Naive thymus-derived CD4-positive, alpha-beta T cell (primary cell): ENCODE measurements at regions of chr16 and their contacts with region 1.

Region 1: DNA sequence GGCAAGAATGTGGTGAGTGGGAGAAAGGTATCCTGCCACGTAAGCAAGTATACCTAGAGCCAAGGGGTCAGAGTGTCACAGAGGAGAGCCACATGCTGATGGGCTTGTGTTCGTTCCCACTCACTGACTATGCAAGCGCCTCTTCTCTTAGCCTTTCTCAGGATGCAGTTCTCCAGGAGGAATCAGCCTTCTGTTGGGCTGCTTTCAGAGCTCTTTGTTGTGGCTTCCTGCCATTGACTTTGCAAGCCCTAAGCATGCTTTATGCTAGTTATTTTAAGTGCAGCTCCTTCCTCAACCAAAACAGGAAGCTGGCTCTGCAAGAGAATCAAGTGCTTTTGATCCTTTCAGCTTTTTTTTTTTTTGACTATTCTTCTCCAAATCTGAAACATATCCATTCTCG is 66.6 kb downstream of the SIAH1 start:
- DNase-seq: peak in 8 of 9 donors; percentile 25 to 83 (median 76)
- ATAC-seq: peak; percentile 92
- H3K4me3 ChIP-seq: peak overlapping the region; percentile 25
- H3K4me3 Mint-ChIP-seq: peak overlapping the region; percentile 62 to 88 (median 80)
- H3K27ac ChIP-seq: peak overlapping the region; percentile 9
- H3K27ac Mint-ChIP-seq: peak overlapping the region; percentile 58 to 88 (median 82)
- H3K4me1 ChIP-seq: peaks cover 20 to 35% of the 10 kb centered on the region in 2 donors
- H3K4me1 Mint-ChIP-seq: peaks cover 17 to 77% (median 62%) of the 10 kb centered on the region in 7 donors
- H3K27me3 ChIP-seq: no peaks in the 10 kb centered on the region
- H3K27me3 Mint-ChIP-seq: no peaks in the 10 kb centered on the region

Region 2: GRCh38 chr16:48244080-48244862 is 74.4 kb before region 1 on chr16 and contains the start of gene LONP2:
- CTCF ChIA-PET with region 1: no interaction called
- POLR2A ChIA-PET with region 1: no interaction called
- intact Hi-C with region 1: loop called (anchors 1 kb)
- DNase-seq: peak; percentile 79 to 97 (median 93)
- ATAC-seq: peak; percentile 99
- H3K4me3 ChIP-seq: peak within 1 kb of the TSS; percentile 78
- H3K4me3 Mint-ChIP-seq: peak within 1 kb of the TSS; percentile 93 to 100 (median 96)
- H3K27ac ChIP-seq: peak within 1 kb of the TSS; percentile 78
- H3K27ac Mint-ChIP-seq: peak within 1 kb of the TSS; percentile 89 to 98 (median 96)
- H3K4me1 ChIP-seq: peaks cover 25 to 27% of the 10 kb centered on the region in 2 donors
- H3K4me1 Mint-ChIP-seq: peaks cover 29 to 56% (median 45%) of the 10 kb centered on the region in 7 donors
- H3K27me3 ChIP-seq: no peaks in the 10 kb centered on the region
- H3K27me3 Mint-ChIP-seq: no peaks in the 10 kb centered on the region
- total RNA-seq, gene LONP2: 62.3 to 124 (median 83.0) TPM

Region 3: DNA sequence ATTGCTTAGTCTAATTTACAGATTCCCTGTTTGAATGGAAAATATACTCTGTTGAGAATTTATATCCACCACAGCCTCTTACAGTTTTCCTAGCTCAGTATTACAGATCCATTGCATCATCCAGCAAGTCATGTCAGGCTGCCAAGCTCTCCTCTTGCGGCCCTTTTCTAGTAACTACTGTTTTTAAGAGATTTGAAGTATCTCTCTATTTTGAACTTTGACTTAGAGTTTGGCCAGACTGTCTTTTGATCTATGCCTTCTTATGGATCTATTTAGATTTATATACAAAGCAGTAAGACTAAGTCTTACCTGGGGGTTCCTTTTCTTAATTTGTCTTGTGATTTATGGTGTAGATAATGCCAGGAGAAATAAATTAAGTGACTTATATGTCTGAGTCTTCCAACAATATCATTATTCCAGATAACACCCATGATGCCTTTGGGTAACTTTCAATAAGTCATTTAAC is 18.2 kb before region 1 on chr16:
- CTCF ChIA-PET with region 1: no interaction called
- POLR2A ChIA-PET with region 1: interaction called, 5 read pairs
- intact Hi-C with region 1: loop called in 1 of 2 experiments (anchors 2 kb)
- DNase-seq: no peak
- ATAC-seq: no peak
- H3K4me3 ChIP-seq: no peak overlapping the region
- H3K4me3 Mint-ChIP-seq: no peak overlapping the region
- H3K27ac ChIP-seq: no peak overlapping the region
- H3K27ac Mint-ChIP-seq: peak overlapping the region in 7 of 9 donors; percentile 10 to 76 (median 56)
- H3K4me1 ChIP-seq: no peaks in the 10 kb centered on the region
- H3K4me1 Mint-ChIP-seq: peaks cover 0 to 8% (median 2%) of the 10 kb centered on the region in 7 donors
- H3K27me3 ChIP-seq: no peaks in the 10 kb centered on the region
- H3K27me3 Mint-ChIP-seq: no peaks in the 10 kb centered on the region

Region 4: DNA sequence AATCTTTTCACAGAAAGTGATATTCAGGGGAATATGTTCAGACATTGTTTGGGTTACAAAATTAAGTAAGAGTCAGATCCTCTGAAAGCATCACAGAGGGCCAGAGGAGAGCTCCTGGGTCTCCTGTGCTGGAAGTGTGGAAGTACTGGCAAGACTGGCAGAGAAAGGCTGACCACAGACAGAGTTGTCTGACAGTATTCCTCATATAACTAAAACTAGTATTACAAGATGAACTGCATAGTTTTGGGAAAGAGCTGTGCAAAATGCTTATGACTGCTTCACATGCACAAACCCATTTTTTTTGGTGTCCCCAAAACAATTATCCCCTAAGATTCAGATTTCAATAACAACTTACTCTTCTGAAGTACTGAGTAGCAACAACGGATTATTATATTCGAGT is 256.1 kb after region 1 on chr16:
- CTCF ChIA-PET with region 1: no interaction called
- POLR2A ChIA-PET with region 1: no interaction called
- intact Hi-C with region 1: no loop called
- DNase-seq: no peak
- ATAC-seq: no peak
- H3K4me3 ChIP-seq: no peak overlapping the region
- H3K4me3 Mint-ChIP-seq: peak overlapping the region in 6 of 10 donors; percentile 1 to 46 (median 17)
- H3K27ac ChIP-seq: no peak overlapping the region
- H3K27ac Mint-ChIP-seq: peak overlapping the region in 1 of 9 donors; percentile 9
- H3K4me1 ChIP-seq: peaks cover 18 to 28% of the 10 kb centered on the region in 2 donors
- H3K4me1 Mint-ChIP-seq: peaks cover 51 to 95% (median 92%) of the 10 kb centered on the region in 7 donors
- H3K27me3 ChIP-seq: no peaks in the 10 kb centered on the region
- H3K27me3 Mint-ChIP-seq: no peaks in the 10 kb centered on the region

Region 5: DNA sequence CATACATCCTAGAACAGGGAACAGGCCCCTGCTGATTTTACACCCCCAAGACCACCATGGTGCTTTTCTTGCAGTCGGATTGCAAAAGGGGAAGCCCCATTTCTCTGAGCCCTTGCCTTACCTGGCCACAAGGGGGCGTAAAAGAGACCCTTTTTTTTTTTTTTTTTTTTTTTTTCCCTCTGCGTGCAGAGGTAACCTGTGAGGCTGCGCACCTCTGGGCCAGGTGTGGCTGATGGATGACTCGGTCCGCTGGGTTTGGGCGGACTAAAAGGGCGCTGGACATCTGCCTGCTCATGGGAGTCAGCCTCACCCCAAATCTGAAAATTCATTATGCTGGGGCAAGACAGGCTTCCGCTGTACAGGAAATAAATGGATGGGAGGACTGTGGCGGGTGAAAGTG is 682.0 kb after region 1 on chr16:
- CTCF ChIA-PET with region 1: no interaction called
- POLR2A ChIA-PET with region 1: no interaction called
- intact Hi-C with region 1: no loop called
- DNase-seq: no peak
- ATAC-seq: no peak
- H3K4me3 ChIP-seq: no peak overlapping the region
- H3K4me3 Mint-ChIP-seq: no peak overlapping the region
- H3K27ac ChIP-seq: no peak overlapping the region
- H3K27ac Mint-ChIP-seq: no peak overlapping the region
- H3K4me1 ChIP-seq: no peaks in the 10 kb centered on the region
- H3K4me1 Mint-ChIP-seq: no peaks in the 10 kb centered on the region
- H3K27me3 ChIP-seq: no peaks in the 10 kb centered on the region
- H3K27me3 Mint-ChIP-seq: peaks cover 0 to 12% (median 0%) of the 10 kb centered on the region in 5 donors